Activated T-helper 2 cell treated with anti-CD3 and anti-CD28 coated beads, Interferon-gamma antibody, Interleukin-2, Interleukin-4, amounts not matched to agents 10 μg/mL and 5 μg/mL and 100 μg/mL, durations not matched to agents 14 hours and 24 hours and 36 hours (primary cell): ENCODE measurements at regions of chr2 and their contacts with region 1.

Region 1: DNA sequence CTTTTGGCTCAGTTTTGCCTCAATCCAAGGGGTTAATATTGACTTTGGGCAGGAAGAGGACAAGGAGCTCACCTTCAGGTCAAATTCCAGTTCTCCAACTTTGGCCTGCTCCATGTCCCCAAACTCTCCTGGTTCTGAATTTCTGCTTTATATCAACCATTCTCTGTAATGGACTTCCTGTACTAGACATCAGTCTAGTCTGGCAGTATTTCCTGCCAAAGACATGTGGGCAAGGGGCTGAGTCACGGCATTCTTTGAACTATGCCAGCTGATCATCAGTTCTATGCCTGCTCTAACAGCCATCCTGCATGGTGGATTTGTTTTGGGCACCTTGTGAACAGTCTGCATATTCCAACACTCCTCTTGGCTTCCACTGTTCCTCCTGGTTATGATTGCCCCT is 199.4 kb downstream of the ZEB2 start:
- DNase-seq: peak; percentile 22
- H3K4me3 Mint-ChIP-seq: peak overlapping the region; percentile 51
- H3K27ac Mint-ChIP-seq: peak overlapping the region; percentile 78
- H3K4me1 Mint-ChIP-seq: peaks cover 62% of the 10 kb centered on the region
- H3K27me3 Mint-ChIP-seq: no peaks in the 10 kb centered on the region

Region 2: GRCh38 chr2:143705108-143705686 is 615.3 kb before region 1 on chr2:
- intact Hi-C with region 1: loop called (anchors 10 kb)
- DNase-seq: no peak
- H3K4me3 Mint-ChIP-seq: no peak overlapping the region
- H3K27ac Mint-ChIP-seq: peak overlapping the region; percentile 59
- H3K4me1 Mint-ChIP-seq: peaks cover 23% of the 10 kb centered on the region
- H3K27me3 Mint-ChIP-seq: no peaks in the 10 kb centered on the region

Region 3: DNA sequence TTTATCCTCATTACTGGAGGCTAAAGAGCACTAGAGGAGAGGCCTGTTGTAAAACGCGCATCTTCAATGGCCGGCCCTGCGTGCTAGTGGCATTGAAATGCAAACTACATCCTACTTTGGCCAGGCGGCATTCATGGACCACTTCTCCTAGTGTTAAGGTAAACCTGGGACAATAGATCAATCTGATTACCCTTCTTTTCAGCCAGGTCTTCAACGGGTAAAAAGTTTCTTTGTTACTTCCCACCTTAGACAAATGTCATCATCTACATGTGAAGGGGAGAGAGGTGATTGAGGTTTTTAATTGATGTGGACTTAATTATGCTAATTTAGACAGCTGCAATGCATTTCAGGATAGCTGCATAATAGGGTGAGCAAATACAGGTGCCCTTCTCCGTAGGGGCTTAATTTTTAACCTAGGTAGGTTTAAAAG is 428.6 kb before region 1 on chr2:
- intact Hi-C with region 1: no loop called
- DNase-seq: no peak
- H3K4me3 Mint-ChIP-seq: no peak overlapping the region
- H3K27ac Mint-ChIP-seq: no peak overlapping the region
- H3K4me1 Mint-ChIP-seq: no peaks in the 10 kb centered on the region
- H3K27me3 Mint-ChIP-seq: peaks cover 17% of the 10 kb centered on the region

Region 4: DNA sequence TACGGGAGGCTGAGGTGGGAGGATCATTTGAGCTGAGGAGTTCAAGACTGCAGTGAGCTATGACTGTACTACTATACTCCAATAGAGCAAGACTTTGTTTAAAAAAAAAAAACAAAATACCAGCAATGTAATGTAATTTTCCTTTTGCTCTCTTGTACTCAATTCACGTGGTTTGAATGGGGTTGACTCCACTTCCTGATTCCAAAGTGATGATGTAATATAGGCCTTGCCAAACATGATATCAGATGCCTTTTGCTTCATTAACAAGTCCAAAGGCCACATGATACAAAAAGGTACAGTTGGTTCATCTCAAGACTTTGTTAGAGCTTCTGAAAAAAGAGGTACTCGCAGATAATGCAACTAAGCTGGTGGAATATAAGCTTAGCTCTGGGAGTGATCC is 122.4 kb before region 1 on chr2:
- intact Hi-C with region 1: loop called (anchors 2 kb)
- DNase-seq: no peak
- H3K4me3 Mint-ChIP-seq: no peak overlapping the region
- H3K27ac Mint-ChIP-seq: peak overlapping the region; percentile 82
- H3K4me1 Mint-ChIP-seq: peaks cover 58% of the 10 kb centered on the region
- H3K27me3 Mint-ChIP-seq: no peaks in the 10 kb centered on the region

Region 5: DNA sequence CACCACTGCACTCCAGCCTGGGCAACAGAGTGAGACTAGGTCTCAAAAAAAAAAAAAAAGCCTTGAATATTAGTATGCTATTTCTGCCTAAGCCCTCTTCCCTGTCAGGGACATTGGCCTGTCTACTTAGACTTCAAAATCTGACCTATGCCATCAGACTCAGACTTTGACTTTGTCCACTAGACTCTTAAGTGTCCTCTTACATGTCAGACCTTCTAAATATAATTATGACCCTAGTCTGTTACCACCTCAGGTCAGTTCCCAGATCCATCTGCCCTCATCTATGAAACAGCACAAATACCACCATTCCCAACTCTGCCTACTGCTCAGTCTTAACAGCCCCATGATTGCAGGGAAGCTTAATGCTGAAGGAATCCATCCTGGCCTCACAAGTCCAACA is 45.2 kb before region 1 on chr2:
- intact Hi-C with region 1: loop called (anchors 2 kb)
- DNase-seq: no peak
- H3K4me3 Mint-ChIP-seq: no peak overlapping the region
- H3K27ac Mint-ChIP-seq: no peak overlapping the region
- H3K4me1 Mint-ChIP-seq: peaks cover 38% of the 10 kb centered on the region
- H3K27me3 Mint-ChIP-seq: no peaks in the 10 kb centered on the region

Region 6: DNA sequence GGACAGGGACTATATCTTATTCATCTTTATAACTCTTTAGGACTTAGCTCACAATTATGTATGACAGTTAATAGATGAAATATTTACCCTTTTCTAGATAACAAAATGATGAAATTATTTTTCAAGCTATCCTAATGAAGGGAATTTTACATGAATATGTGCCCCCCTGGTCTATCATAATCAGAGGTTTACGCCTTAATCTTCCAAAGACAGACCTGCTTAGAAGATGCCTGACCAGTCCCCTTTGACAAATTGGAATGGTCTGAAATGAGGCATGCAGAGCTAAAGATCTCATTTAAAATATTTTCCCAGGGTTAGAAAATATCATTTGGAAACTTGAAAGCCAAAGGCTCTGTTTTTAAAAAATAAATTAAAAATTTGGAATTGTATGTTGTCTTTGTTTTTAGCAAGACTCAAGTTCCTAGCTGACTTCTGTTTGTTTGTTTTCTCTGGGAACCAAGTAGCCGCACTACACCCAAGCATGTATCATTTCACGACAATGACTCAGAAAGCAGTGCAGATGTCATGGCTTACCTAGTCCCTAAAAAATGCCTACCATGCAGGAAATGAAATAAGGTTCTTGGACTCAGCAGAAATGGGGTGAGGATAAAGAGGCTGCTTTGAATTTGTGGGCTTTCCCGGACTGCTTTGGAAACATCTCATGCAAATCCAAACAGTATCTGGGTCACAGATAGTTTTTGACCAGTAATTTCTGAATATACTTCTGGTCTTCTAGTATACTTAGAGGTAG is 37.3 kb after region 1 on chr2:
- intact Hi-C with region 1: loop called (anchors 1 kb)
- DNase-seq: no peak
- H3K4me3 Mint-ChIP-seq: no peak overlapping the region
- H3K27ac Mint-ChIP-seq: peak overlapping the region; percentile 56
- H3K4me1 Mint-ChIP-seq: peaks cover 35% of the 10 kb centered on the region
- H3K27me3 Mint-ChIP-seq: no peaks in the 10 kb centered on the region

Region 7: GRCh38 chr2:144389151-144389929 is 68.8 kb after region 1 on chr2:
- intact Hi-C with region 1: no loop called
- DNase-seq: no peak
- H3K4me3 Mint-ChIP-seq: no peak overlapping the region
- H3K27ac Mint-ChIP-seq: no peak overlapping the region
- H3K4me1 Mint-ChIP-seq: peaks cover 4% of the 10 kb centered on the region
- H3K27me3 Mint-ChIP-seq: peaks cover 2% of the 10 kb centered on the region

Region 8: DNA sequence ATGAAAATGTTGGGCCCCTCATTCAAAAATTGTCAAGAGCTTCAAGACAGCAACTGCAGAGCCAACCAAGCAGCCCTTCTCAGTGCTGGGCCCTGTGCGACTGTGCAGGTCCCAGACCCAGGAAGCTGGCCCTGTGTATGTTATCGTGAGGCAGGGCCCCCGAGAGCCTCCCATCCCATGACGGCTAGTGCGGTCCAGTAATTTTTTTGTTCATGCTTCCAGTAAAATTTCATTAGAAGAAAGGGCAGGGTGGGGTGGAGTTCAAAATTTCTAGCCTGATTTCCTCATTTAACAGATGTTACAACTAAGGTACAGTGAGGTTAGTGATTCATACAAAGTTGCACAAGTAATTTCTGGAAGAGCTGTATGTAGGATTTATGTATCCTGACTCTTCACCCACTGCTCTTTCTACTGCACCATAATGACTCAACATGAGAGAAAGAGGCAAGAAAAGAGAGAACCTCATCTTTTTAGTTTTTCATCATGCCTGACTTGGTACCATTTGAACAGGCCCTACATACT is 93.9 kb after region 1 on chr2:
- intact Hi-C with region 1: loop called (anchors 2 kb)
- DNase-seq: no peak
- H3K4me3 Mint-ChIP-seq: no peak overlapping the region
- H3K27ac Mint-ChIP-seq: peak overlapping the region; percentile 81
- H3K4me1 Mint-ChIP-seq: peaks cover 24% of the 10 kb centered on the region
- H3K27me3 Mint-ChIP-seq: no peaks in the 10 kb centered on the region